Activated naive CD4-positive, alpha-beta T cell treated with anti-CD3 and anti-CD28 coated beads, Interleukin-2, amount 10 ng/mL, durations not matched to agents 7 days and 5 days (primary cell): ENCODE measurements at regions of chr21 and their contacts with region 1.

Region 1: DNA sequence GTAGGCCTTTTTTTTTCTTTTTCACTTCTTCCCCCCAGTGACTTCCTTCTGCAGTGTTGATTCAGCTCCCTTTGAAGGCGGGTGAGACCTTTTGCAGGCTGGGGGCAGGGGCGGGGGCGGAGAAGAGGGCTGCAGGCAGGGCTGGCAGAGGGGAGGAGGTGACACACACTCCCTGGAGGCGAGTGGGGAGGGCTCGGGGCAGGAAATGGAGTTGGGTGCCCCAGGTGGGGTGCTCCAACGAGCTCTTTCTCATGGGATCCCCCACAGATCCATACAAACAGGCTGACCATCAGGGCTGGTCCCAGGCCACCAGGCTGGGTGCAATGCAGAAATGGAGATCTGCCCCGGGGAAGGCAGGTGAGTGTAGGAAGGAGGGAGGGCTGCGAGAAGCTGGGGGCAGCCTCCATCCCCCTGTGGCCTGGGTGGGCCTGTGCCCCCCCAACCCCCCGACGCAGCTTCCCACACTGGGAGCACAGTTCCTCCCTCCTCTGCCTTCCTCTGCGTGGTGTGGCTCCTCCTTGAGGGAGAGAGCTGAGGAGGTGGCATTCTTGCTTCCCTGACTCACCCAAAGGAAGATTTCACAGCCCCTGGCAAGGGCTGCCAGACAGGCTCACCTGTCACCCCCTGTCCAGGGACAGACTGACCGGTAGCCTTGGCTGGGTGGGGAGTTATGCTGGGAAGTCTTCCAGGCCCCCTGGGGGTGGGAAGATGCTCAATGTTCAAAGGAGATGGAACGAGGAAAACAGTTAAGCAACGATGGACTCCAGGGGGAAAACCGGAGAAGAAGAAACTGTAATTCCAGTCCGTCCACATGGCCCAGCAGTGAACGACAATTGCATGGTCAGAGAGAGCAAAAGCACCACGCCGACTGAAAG is 7.1 kb upstream of the ITGB2 start:
- DNase-seq: peak; percentile 94
- H3K4me3 Mint-ChIP-seq: peak overlapping the region; percentile 93
- H3K27ac Mint-ChIP-seq: peak overlapping the region; percentile 98
- H3K4me1 Mint-ChIP-seq: peaks cover 82% of the 10 kb centered on the region
- H3K27me3 Mint-ChIP-seq: no peaks in the 10 kb centered on the region

Region 2: GRCh38 chr21:44845399-44846223 is 82.2 kb before region 1 on chr21:
- CTCF ChIA-PET with region 1: no interaction called
- DNase-seq: peak; percentile 74
- H3K4me3 Mint-ChIP-seq: peak overlapping the region; percentile 51
- H3K27ac Mint-ChIP-seq: no peak overlapping the region
- H3K4me1 Mint-ChIP-seq: peaks cover 21% of the 10 kb centered on the region
- H3K27me3 Mint-ChIP-seq: peaks cover 47% of the 10 kb centered on the region

Region 3: DNA sequence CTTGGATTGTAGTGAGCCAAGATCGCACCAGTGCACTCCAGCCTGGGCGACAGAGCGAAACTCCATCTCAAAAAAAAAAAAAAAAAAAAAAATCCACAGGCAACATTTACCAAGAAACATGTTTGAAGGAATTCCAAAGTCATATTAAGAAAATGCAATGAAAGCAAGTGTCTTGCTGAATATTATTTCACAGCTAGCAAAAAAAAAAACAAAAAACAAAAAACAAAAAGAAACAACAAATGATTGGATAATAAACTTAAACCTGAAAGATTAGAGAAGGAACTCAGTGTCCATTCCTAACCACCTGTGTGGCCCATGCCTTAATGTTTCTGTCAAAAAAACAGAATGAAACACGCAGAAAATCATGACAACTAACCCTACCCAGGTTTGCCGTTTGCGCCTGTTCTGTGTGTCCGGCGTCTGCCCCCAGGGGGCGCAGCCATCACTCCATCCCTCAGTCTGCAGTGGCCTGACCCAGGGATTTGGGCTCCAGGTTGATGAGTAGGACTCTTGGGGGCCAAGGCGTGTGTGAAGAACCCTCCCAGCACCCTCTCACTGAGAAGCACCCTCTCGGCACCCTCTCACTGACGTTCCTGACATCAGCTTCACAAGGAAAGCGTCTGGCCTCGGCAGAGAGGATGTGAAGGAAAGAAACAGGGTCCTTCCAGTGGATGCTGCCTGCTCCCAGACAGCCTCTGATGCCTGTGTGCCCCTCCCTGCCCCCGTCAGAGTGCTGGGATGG is 35.1 kb before region 1 on chr21:
- CTCF ChIA-PET with region 1: interaction called, 68 read pairs
- DNase-seq: peak; percentile 85
- H3K4me3 Mint-ChIP-seq: no peak overlapping the region
- H3K27ac Mint-ChIP-seq: peak overlapping the region; percentile 80
- H3K4me1 Mint-ChIP-seq: peaks cover 15% of the 10 kb centered on the region
- H3K27me3 Mint-ChIP-seq: no peaks in the 10 kb centered on the region

Region 4: GRCh38 chr21:44911389-44912157 is 16.3 kb before region 1 on chr21:
- CTCF ChIA-PET with region 1: interaction called, 20 read pairs
- DNase-seq: peak; percentile 78
- H3K4me3 Mint-ChIP-seq: peak overlapping the region; percentile 74
- H3K27ac Mint-ChIP-seq: peak overlapping the region; percentile 92
- H3K4me1 Mint-ChIP-seq: peaks cover 70% of the 10 kb centered on the region
- H3K27me3 Mint-ChIP-seq: no peaks in the 10 kb centered on the region

Region 5: DNA sequence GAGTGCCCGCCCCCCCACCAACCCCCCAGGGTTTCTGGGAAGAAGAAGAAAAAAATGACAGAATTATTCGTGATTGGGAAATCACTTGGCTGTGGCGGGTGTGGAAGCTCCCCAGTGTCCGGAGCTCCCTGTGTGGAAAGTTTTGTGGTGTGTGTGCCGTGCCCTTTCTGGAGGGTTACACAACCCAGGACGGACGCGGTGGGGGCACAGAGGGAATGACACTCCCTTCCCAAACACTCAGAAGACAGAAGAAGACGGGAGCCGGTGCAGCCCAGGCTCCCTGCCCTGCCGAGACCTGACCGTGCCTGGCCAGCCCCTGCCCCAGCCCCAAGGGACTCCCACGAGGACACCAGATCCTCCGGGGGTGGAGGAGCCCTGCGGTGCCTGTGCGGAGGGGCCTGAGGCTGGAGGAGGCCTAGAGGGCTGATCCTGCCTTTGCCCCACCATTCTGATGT is 113.6 kb after region 1 on chr21:
- CTCF ChIA-PET with region 1: no interaction called
- DNase-seq: no peak
- H3K4me3 Mint-ChIP-seq: no peak overlapping the region
- H3K27ac Mint-ChIP-seq: no peak overlapping the region
- H3K4me1 Mint-ChIP-seq: no peaks in the 10 kb centered on the region
- H3K27me3 Mint-ChIP-seq: peaks cover 5% of the 10 kb centered on the region